ENCODE measurements at regions of chr3 and their contacts with region 1.

Region 1: GRCh38 chr3:49021813-49022687 is at the start of gene NDUFAF3:
- DNase-seq: peak; percentile 95
- H3K4me3 ChIP-seq: peak within 1 kb of the TSS; percentile 87 to 94
- H3K27ac ChIP-seq: peak within 1 kb of the TSS; percentile 99
- H3K4me1 ChIP-seq: peaks cover under 1 to 35% of the 10 kb centered on the region in 2 experiments; a peak in 1 of 4 replicates
- H3K27me3 ChIP-seq: no peaks in the 10 kb centered on the region
- CTCF ChIP-seq: peak; percentile 88
- EP300 ChIP-seq: peak in 1 of 2 experiments; percentile 33; a peak in 1 of 4 replicates
- RAD21 ChIP-seq: 0 out of 2 replicates have a peak, but pooled peaks have one; percentile 19
- polyA plus RNA-seq, gene NDUFAF3: 85.3 and 104 TPM in 2 replicates

Region 2: GRCh38 chr3:48820612-48821324 is 201.3 kb before region 1 on chr3:
- CTCF ChIA-PET with region 1: no interaction called
- POLR2A ChIA-PET with region 1: no interaction called
- DNase-seq: no peak
- H3K4me3 ChIP-seq: no peak overlapping the region
- H3K27ac ChIP-seq: peak overlapping the region in 1 of 2 experiments; percentile 9; a peak in 1 of 4 replicates
- H3K4me1 ChIP-seq: 0 out of 4 replicates have a peak, but pooled peaks cover 0 to 7% of the 10 kb centered on the region in 2 experiments
- H3K27me3 ChIP-seq: no peaks in the 10 kb centered on the region
- CTCF ChIP-seq: no peak
- EP300 ChIP-seq: no peak
- RAD21 ChIP-seq: no peak

Region 3: DNA sequence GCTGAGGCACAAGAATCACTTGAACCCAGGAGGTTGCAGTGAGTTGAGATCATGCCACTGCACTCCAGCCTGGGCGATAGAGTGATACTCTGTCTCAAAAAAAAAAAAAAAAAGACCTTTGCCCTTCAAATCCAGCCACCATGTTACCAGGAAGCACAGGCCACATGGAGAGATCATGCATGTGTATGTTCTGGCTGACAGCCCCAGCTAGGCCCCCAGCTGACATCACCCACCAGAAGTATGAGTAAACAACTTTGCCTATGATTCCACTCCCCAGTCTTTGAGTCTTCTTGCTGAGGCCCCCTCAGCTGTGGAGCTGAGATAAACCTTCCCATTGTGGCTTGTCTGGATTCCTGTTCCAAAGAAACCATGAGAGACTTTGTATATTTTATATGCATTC is 106.8 kb before region 1 on chr3:
- CTCF ChIA-PET with region 1: no interaction called
- POLR2A ChIA-PET with region 1: no interaction called
- DNase-seq: no peak
- H3K4me3 ChIP-seq: no peak overlapping the region
- H3K27ac ChIP-seq: no peak overlapping the region
- H3K4me1 ChIP-seq: peaks cover 0 to 3% of the 10 kb centered on the region in 2 experiments; a peak in 1 of 4 replicates
- H3K27me3 ChIP-seq: no peaks in the 10 kb centered on the region
- CTCF ChIP-seq: no peak
- EP300 ChIP-seq: no peak
- RAD21 ChIP-seq: no peak

Region 4: GRCh38 chr3:48931944-48932580 is 90.0 kb before region 1 on chr3:
- CTCF ChIA-PET with region 1: no interaction called
- POLR2A ChIA-PET with region 1: no interaction called
- DNase-seq: peak; percentile 14
- H3K4me3 ChIP-seq: no peak overlapping the region
- H3K27ac ChIP-seq: peak overlapping the region in 1 of 2 experiments; percentile 25; a peak in 1 of 4 replicates
- H3K4me1 ChIP-seq: peaks cover 12 to 19% of the 10 kb centered on the region in 2 experiments; a peak in 3 of 4 replicates
- H3K27me3 ChIP-seq: no peaks in the 10 kb centered on the region
- CTCF ChIP-seq: no peak
- EP300 ChIP-seq: no peak
- RAD21 ChIP-seq: no peak

Region 5: DNA sequence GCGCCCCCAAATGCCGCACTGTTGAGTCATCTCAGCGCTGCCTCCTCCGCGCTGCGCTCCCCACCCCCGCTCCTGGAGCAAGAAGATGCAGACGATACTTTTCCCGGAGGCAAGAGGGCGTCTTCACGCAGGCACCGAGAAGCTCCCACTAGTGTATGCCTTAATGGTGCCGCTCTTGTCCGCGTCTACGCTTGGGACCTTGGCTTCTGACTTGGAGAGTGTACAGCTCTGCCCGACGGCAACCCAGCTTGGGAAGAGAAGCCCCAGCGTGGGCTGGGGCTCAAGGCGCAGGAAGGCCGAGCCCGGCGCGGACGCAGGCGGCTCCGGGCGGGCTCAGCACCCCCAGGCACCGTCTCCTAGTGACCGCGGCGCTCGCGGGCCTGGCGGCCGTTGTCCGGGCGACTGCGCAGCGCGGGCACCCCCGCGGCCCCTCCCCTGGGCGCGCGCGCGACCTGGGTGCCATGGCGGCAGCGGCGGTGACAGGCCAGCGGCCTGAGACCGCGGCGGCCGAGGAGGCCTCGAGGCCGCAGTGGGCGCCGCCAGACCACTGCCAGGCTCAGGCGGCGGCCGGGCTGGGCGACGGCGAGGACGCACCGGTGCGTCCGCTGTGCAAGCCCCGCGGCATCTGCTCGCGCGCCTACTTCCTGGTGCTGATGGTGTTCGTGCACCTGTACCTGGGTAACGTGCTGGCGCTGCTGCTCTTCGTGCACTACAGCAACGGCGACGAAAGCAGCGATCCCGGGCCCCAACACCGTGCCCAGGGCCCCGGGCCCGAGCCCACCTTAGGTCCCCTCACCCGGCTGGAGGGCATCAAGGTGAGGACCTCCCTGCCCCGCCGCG is 32.0 kb before region 1 on chr3 and contains the start of gene P4HTM:
- CTCF ChIA-PET with region 1: interaction called, 114 read pairs
- POLR2A ChIA-PET with region 1: interaction called, 13 read pairs
- DNase-seq: no peak
- H3K4me3 ChIP-seq: peak within 1 kb of the TSS; percentile 35 to 63; a peak in 3 of 4 replicates
- H3K27ac ChIP-seq: peak within 1 kb of the TSS; percentile 12 to 88; a peak in 3 of 4 replicates
- H3K4me1 ChIP-seq: peaks cover 0 to 2% of the 10 kb centered on the region in 2 experiments; a peak in 1 of 4 replicates
- H3K27me3 ChIP-seq: no peaks in the 10 kb centered on the region
- CTCF ChIP-seq: peak; percentile 34
- EP300 ChIP-seq: peak in 1 of 2 experiments; percentile 26; a peak in 1 of 4 replicates
- RAD21 ChIP-seq: no peak
- polyA plus RNA-seq, gene P4HTM: 21.0 and 21.4 TPM in 2 replicates

Region 6: DNA sequence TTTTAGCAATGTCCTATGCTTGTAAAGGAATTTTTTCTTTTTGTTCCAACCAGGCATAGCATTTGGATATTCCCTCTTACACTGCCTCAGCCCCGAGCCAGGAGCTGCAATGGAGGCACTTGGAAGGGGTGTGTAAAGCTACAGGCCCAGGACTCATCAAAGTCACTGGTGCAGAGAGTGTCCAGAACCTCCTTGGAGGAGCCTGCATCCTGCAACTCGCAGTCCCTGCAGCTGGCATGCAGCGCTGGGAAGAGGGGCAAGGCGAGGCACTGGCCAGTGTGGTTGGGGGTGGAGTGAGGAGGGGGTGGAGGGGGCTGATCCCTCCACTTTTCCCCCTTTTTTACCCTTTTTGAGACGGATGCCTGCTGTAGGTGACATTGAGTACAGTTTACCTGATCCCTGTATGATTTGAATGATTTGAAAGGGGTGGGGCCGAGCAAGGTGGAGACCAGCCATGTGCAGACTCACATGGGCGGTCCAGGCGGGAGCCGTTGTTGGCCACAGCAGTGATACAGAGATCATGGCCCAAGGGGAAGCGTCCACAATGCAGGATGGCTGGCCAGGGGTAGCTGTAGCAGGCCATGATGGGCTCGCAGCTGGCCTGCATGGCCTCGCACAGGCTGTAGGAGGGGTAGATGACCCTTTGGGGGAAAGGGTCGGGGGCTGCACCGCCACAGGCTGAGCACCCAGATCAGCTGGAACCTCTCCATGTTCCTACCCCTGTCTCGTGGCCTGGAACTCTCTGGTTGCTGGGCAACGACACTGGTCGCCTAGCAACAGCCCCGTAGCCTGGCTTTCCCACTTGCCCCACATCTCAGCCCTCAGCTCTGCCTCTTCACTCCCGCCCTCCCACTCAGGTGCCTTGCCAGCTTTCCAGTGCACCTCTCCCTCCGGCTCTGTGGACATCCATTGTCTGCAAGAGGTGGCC is 24.1 kb before region 1 on chr3:
- CTCF ChIA-PET with region 1: interaction called, 13 read pairs
- POLR2A ChIA-PET with region 1: interaction called, 15 read pairs
- DNase-seq: peak; percentile 86
- H3K4me3 ChIP-seq: no peak overlapping the region
- H3K27ac ChIP-seq: peak overlapping the region in 1 of 2 experiments; percentile 81; a peak in 2 of 4 replicates
- H3K4me1 ChIP-seq: peaks cover 0 to 32% of the 10 kb centered on the region in 2 experiments; a peak in 1 of 4 replicates
- H3K27me3 ChIP-seq: no peaks in the 10 kb centered on the region
- CTCF ChIP-seq: no peak
- EP300 ChIP-seq: no peak
- RAD21 ChIP-seq: no peak